ENCODE measurements at regions of chr12 and their contacts with region 1.

Region 1: GRCh38 chr12:103495479-103496456 is at the start of gene C12orf42:
- DNase-seq: peak in 1 of 2 experiments; percentile 35
- H3K4me3 ChIP-seq: no peak within 1 kb of the TSS
- H3K27ac ChIP-seq: no peak within 1 kb of the TSS
- H3K4me1 ChIP-seq: no peaks in the 10 kb centered on the region
- H3K27me3 ChIP-seq: no peaks in the 10 kb centered on the region
- CTCF ChIP-seq: peak; percentile 37; the same call in 1 of the 2 replicates
- total RNA-seq, gene C12orf42: not detected in 2 replicates

Region 2: DNA sequence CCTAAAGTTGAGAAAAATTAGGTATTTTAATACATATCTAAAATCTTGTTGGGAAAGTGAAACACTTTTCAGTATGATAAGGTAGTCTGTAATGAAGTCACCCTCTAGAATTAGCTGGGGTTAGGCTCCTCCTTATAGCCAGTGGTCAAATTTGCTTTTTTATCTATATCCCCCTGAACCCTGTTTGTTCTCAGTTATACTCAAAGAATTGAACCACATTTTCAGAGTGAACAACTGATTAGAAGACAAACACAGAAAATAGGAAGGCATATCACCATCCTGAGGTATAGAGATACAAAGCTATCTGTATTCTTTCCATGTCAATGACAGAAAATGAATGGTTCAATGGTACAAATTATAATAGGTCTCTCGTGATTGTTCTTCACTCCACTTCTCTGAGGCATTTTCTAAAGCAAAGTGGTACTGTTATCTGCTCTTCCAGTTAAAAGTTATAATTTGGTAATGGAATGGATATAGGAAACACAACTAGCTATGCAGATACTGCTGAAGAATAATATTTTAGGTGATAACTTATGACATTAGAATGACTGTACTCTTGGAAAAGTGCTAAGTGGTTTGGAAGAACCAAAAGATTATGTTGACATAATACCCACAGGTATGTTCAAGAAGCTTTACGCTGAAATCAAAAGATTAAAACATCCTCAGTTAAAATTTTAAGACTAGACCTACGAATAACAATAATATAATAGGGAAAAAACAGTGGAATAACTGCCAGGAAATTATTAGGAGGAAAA is 1461.6 kb before region 1 on chr12:
- CTCF ChIA-PET with region 1: no interaction called
- POLR2A ChIA-PET with region 1: interaction called, 16 read pairs
- intact Hi-C with region 1: no loop called
- DNase-seq: no peak
- H3K4me3 ChIP-seq: no peak overlapping the region
- H3K27ac ChIP-seq: no peak overlapping the region
- H3K4me1 ChIP-seq: no peaks in the 10 kb centered on the region
- H3K27me3 ChIP-seq: no peaks in the 10 kb centered on the region
- CTCF ChIP-seq: no peak

Region 3: DNA sequence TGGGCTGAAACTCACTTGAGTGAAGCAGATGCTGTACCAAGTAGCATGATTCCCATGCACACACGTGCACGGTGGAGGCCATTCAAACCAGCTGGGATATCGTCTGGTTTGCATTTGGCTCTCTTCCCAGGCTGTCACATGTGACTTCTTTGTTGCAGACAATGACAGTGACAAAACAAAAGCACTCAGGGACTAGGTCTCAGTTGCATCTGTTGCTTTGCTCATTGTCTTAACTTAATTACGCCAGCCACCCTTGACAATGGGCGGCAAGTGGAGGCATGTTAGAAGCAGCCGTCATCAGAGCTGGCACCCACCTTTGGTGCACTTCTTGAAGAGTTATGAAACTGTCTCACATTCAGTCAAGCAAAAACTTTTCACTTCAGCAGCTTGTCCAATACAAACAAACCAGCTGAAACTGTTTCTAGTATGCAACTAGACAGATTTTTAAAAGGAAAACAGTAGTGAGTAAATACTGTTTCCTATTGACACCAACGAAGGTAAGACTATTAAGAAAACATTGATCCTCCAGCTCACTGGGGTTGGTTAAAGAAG is 1089.7 kb before region 1 on chr12:
- CTCF ChIA-PET with region 1: no interaction called
- POLR2A ChIA-PET with region 1: no interaction called
- intact Hi-C with region 1: no loop called
- DNase-seq: no peak
- H3K4me3 ChIP-seq: no peak overlapping the region
- H3K27ac ChIP-seq: no peak overlapping the region
- H3K4me1 ChIP-seq: no peaks in the 10 kb centered on the region
- H3K27me3 ChIP-seq: no peaks in the 10 kb centered on the region
- CTCF ChIP-seq: no peak

Region 4: GRCh38 chr12:103462675-103463074 is 33.1 kb before region 1 on chr12:
- CTCF ChIA-PET with region 1: no interaction called
- POLR2A ChIA-PET with region 1: no interaction called
- intact Hi-C with region 1: no loop called
- DNase-seq: no peak
- H3K4me3 ChIP-seq: no peak overlapping the region
- H3K27ac ChIP-seq: no peak overlapping the region
- H3K4me1 ChIP-seq: no peaks in the 10 kb centered on the region
- H3K27me3 ChIP-seq: 0 out of 2 replicates have a peak, but pooled peaks cover 3% of the 10 kb centered on the region
- CTCF ChIP-seq: no peak

Region 5: DNA sequence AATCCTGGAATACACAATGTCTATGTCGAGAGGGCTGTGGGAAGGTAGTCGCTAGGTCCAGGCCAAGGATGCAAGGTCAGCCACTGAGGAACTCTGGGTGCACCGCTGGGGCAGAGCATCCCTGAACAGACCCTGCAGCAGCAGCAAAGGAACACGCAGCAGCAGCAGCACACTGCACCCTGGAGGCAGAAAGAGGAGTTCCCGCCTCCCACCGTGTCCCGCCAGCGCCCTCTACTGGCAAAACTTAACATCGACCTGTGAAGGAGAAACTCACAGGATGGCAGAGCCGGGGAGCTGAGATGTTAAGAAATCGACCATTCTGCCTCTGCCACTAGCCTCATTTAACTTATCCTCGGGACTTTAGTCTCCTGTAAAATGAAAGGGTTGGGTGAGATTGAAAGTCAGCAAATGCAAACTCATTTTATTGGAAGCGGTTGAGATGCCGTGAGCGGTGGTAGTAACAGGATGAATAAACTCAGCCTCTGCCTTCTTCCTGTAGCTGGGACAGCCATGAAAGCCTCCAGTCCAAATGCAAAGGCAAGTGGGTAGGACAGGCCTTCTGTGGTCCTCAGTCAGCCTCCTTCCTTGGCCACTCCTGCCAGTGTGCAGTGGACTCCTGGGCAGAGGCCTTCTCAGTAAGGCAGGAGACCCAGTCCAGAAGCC is 136.9 kb after region 1 on chr12:
- CTCF ChIA-PET with region 1: no interaction called
- POLR2A ChIA-PET with region 1: no interaction called
- intact Hi-C with region 1: loop called (anchors 2 kb)
- DNase-seq: peak; percentile 38 to 73
- H3K4me3 ChIP-seq: no peak overlapping the region
- H3K27ac ChIP-seq: no peak overlapping the region
- H3K4me1 ChIP-seq: no peaks in the 10 kb centered on the region
- H3K27me3 ChIP-seq: peaks cover 18% of the 10 kb centered on the region
- CTCF ChIP-seq: peak; percentile 93

Region 6: GRCh38 chr12:103877934-103878510 is 382.3 kb after region 1 on chr12:
- CTCF ChIA-PET with region 1: interaction called, 3 read pairs
- POLR2A ChIA-PET with region 1: no interaction called
- intact Hi-C with region 1: loop called (anchors 10 kb)
- DNase-seq: peak; percentile 48 to 52
- H3K4me3 ChIP-seq: no peak overlapping the region
- H3K27ac ChIP-seq: no peak overlapping the region
- H3K4me1 ChIP-seq: peaks cover 6% of the 10 kb centered on the region; the same call in 1 of the 2 replicates
- H3K27me3 ChIP-seq: no peaks in the 10 kb centered on the region
- CTCF ChIP-seq: peak; percentile 85